Tibial artery (tissue), 4 donors: ENCODE measurements at regions of chr17 and their contacts with region 1.

Region 1: GRCh38 chr17:18033442-18034099 is 5.4 kb downstream of the ATPAF2 start:
- DNase-seq: peak in 1 of 2 donors; percentile 48
- H3K4me3 ChIP-seq: no peak overlapping the region
- H3K27ac ChIP-seq: no peak overlapping the region
- H3K4me1 ChIP-seq: peaks cover 0 to 16% (median 11%) of the 10 kb centered on the region in 4 donors
- H3K27me3 ChIP-seq: no peaks in the 10 kb centered on the region
- CTCF ChIP-seq: peak; percentile 45 to 67

Region 2: GRCh38 chr17:17975436-17975835 is 58.1 kb before region 1 on chr17:
- intact Hi-C with region 1: loop called (anchors 2 kb)
- DNase-seq: no peak
- H3K4me3 ChIP-seq: no peak overlapping the region
- H3K27ac ChIP-seq: no peak overlapping the region
- H3K4me1 ChIP-seq: peaks cover 0 to 23% (median 15%) of the 10 kb centered on the region in 4 donors
- H3K27me3 ChIP-seq: no peaks in the 10 kb centered on the region
- CTCF ChIP-seq: no peak

Region 3: DNA sequence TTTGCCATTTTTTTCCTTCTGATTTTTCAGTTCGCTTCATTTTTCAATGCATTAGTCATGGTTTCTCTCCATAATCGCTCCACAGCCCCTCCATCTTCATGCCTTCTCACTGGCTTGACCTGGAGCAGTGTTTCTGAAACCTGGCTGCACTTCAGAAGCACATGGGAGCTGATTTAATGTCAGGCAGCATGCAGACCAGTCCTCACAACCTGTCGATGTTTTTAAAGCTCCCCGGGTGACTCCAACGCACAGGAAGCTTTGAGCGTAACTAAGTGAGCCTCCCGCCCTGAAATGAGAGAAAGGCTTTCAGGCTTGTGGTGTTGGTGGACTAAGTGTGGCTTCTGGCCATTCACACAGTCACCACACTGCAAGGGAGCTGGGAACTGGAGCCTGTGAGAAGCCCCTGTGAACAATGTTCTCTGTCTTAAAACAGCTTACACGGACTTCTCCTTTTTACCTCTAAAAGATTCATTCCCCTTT is 37.3 kb after region 1 on chr17:
- intact Hi-C with region 1: no loop called
- DNase-seq: no peak
- H3K4me3 ChIP-seq: no peak overlapping the region
- H3K27ac ChIP-seq: no peak overlapping the region
- H3K4me1 ChIP-seq: peaks cover 0 to 12% (median 7%) of the 10 kb centered on the region in 4 donors
- H3K27me3 ChIP-seq: no peaks in the 10 kb centered on the region
- CTCF ChIP-seq: no peak